Activated CD8-positive, alpha-beta T cell treated with anti-CD3 and anti-CD28 coated beads for 36 hours (primary cell): ENCODE measurements at regions of chr1 and their contacts with region 1.

Region 1: DNA sequence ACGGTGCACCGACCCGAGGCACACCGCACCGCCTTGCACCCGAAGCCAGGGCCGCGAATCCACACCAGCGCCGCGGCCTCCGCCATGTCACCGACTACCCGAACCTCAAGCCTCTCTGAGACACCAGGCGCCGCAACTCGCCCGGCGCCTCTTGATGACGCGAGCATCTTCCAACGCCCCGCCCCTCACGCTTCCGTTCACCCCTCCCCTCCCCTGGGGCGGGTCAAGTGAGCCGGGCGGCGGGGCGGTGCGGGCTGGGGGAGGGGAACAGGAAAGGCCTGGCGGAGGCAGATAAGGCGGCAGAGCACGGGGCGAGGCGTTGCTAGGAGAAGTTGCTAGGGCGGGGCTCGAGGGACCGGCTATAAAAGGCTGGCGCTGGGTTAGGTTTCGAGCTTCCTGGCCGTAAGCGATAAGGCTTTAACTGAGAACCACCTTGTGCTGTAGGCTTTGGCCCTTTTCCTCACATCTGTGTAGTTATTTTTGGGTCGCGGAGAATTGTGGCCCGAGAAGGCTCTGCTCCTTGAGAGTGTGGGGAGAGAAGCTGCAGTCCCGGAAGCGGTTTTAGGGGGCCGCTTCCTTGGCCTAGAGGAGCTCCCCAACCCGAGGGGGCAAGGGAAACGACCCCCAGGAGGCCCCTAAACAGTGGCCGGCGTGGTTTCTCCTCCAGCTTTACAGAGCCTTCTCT is at the start of gene SDE2:
- DNase-seq: peak; percentile 100
- ATAC-seq: peak; percentile 91
- H3K4me3 Mint-ChIP-seq: peak within 1 kb of the TSS; percentile 98
- H3K27ac Mint-ChIP-seq: peak within 1 kb of the TSS; percentile 100
- H3K4me1 Mint-ChIP-seq: peaks cover 67% of the 10 kb centered on the region
- H3K27me3 Mint-ChIP-seq: no peaks in the 10 kb centered on the region
- CTCF ChIP-seq: no peak
- total RNA-seq, gene SDE2: 14.9 to 15.5 TPM

Region 2: DNA sequence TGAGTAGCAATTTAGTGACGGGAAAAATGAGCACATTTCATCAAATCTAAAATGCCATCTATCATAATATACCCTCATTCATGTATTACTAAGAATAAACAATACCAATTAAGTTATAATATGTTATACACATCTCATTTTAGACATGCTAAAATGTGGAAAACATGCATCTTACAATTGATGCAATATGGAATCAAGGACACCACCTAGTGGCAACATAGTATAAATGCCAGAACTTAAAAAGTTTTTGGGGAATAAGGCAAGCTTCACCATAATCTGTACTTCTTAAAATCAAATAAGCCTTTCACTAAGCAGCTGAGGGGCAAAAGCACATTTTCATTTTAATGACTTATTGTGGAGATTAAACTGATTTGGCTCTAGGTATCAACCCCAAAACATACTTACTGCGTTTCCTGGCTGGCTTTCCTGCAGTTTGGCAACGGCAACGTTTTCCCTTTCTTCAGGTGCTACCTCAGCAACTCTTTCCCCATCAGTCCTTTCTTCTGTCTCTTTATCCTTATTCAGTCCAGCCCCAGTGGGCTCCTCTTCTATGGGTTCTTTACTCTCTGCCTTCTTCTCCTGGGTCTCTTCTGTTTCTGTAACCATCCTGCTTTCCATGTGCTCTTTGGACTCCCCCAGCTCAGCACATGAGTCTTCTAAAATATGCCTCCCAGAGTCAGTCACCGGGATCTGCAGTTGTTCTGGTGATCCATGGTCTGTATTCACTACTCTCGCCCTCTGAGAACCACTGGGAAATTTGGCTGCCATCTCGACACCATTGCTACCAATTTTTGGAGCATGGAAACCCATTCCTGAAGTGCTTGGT is 11.7 kb before region 1 on chr1:
- CTCF ChIA-PET with region 1: interaction called, 36 read pairs
- POLR2A ChIA-PET with region 1: interaction called, 7 read pairs
- intact Hi-C with region 1: no loop called
- DNase-seq: no peak
- ATAC-seq: peak; percentile 63
- H3K4me3 Mint-ChIP-seq: no peak overlapping the region
- H3K27ac Mint-ChIP-seq: no peak overlapping the region
- H3K4me1 Mint-ChIP-seq: peaks cover 34% of the 10 kb centered on the region
- H3K27me3 Mint-ChIP-seq: no peaks in the 10 kb centered on the region
- CTCF ChIP-seq: peak; percentile 78